GM12878 (cell line): ENCODE measurements at regions of chr13 and their contacts with region 1.

Region 1: GRCh38 chr13:59721926-59722910 is 441.5 kb downstream of the DIAPH3 start:
- DNase-seq: no peak
- ATAC-seq: no peak
- H3K4me3 ChIP-seq: no peak overlapping the region
- H3K27ac ChIP-seq: no peak overlapping the region
- H3K4me1 ChIP-seq: no peaks in the 10 kb centered on the region
- H3K27me3 ChIP-seq: no peaks in the 10 kb centered on the region
- CTCF ChIP-seq: no peak
- EP300 ChIP-seq: no peak
- POLR2A ChIP-seq: no peak
- RAD21 ChIP-seq: no peak

Region 2: DNA sequence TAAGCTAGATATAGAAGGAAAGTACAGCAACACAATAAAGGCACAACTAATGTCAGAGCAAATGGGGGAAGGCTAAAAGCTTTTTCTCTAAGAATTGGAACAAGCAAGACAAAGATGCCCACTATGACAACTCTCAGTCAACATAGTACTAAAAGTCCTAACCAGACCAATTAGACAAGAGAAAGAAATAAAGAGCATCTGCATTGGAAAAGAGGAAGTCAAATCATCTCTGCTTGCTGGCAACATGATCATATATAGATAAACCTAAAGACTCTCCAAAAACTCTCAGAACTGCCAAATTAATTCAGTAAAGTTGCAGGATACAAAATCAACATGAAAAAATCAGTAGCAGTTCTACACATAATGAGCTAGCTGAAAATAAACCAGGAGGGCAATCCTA is 100.4 kb before region 1 on chr13:
- CTCF ChIA-PET with region 1: no interaction called
- POLR2A ChIA-PET with region 1: no interaction called
- RAD21 ChIA-PET with region 1: no interaction called
- SMC1A ChIA-PET with region 1: no interaction called
- in situ Hi-C with region 1: no loop called
- intact Hi-C with region 1: no loop called
- DNase-seq: no peak
- ATAC-seq: no peak
- H3K4me3 ChIP-seq: no peak overlapping the region
- H3K27ac ChIP-seq: no peak overlapping the region
- H3K4me1 ChIP-seq: no peaks in the 10 kb centered on the region
- H3K27me3 ChIP-seq: no peaks in the 10 kb centered on the region
- CTCF ChIP-seq: no peak
- EP300 ChIP-seq: no peak
- POLR2A ChIP-seq: no peak
- RAD21 ChIP-seq: no peak

Region 3: DNA sequence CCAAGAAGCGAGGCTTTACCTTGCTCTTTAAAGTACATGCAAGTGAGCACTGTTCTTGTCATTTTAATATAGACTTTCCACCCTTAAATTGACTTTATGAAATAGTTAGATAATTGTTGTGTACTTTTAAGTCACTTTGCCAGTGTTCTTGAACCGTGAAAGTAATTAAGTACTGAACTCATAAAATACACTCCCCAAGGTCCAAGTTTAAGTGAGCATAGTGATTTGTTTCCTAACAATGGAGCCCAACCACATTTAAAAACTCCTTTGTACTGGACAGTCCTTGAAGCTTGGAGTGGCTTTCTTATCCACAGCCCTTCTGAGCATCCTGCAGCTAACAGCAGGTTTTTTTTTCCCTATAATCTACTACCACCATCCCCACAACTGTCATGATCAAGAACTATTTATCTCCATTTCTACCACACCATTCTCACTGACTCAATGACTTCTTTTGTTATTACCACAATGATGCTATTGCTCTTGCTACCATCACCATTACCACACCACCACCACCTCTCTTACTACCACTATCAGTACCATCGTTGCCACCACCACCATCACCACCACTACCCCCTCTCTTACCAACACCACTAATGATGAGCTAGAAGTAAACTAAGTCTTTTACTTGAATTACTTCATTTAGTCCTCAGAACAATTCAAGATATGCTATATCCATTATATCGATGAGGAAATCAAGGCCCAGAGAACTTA is 11.1 kb before region 1 on chr13:
- CTCF ChIA-PET with region 1: interaction called, 4 read pairs
- POLR2A ChIA-PET with region 1: no interaction called
- RAD21 ChIA-PET with region 1: interaction called, 3 read pairs
- SMC1A ChIA-PET with region 1: interaction called, 17 read pairs
- in situ Hi-C with region 1: no loop called
- intact Hi-C with region 1: no loop called
- DNase-seq: no peak
- ATAC-seq: no peak
- H3K4me3 ChIP-seq: no peak overlapping the region
- H3K27ac ChIP-seq: no peak overlapping the region
- H3K4me1 ChIP-seq: peaks cover 7% of the 10 kb centered on the region; the same call in 1 of the 2 replicates
- H3K27me3 ChIP-seq: no peaks in the 10 kb centered on the region
- CTCF ChIP-seq: no peak
- EP300 ChIP-seq: no peak
- POLR2A ChIP-seq: no peak
- RAD21 ChIP-seq: no peak